CD4-positive, alpha-beta T cell (primary cell): ENCODE measurements at regions of chr14 and their contacts with region 1.

Region 1: DNA sequence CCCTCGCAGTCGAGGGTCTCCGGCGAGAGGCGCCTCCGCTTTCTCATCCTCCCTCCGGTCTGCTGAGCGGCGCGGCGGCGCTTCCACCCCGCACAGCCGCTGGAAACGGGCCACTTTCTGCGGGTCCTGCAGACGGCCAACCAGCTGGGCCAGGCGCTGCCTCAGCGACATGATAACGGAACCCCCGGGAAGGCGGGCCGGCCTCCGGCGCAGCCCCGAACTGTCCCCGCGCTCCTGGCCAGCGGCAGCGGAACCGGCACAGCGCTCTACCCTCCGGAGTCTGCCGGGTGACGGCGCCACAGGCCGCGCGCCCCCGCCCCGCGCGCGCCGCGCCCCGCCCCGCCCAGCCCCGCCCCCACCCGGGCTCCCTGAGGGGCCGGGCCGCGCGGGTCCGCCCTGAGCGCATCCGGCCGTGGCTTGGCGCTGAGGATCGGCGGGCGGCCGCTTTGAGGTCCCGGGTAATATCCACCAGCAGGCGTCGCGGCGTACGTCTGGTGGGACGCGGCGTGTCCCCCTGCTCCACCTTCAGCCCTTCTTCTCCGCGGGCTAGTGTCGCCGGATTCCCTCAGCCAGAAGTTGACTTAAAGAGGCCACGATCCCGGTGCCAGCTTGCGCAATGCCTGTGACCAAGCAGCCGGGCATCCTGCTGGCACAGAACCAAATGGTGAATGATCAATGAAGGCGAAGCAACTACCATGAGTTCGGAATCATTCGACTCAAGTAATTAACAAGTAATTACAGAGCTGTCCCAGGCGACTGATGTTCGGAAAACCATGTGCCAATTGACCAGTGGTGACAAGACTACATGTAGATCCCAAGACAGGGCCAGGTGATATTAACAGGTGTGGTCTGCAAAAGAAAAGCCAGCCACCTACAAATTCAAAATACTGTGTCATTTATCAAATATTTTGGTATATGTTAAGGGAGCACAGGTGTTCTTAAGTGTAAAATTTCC is at the start of gene SGPP1:
- DNase-seq: peak; percentile 60 to 92 (median 76)
- ATAC-seq: peak; percentile 88
- H3K4me3 ChIP-seq: peak within 1 kb of the TSS; percentile 96
- H3K4me3 Mint-ChIP-seq: peak within 1 kb of the TSS; percentile 93
- H3K27ac ChIP-seq: peak within 1 kb of the TSS; percentile 58 to 65
- H3K27ac Mint-ChIP-seq: peak within 1 kb of the TSS; percentile 93
- H3K4me1 ChIP-seq: peaks cover 20% of the 10 kb centered on the region
- H3K4me1 Mint-ChIP-seq: peaks cover 42% of the 10 kb centered on the region
- H3K27me3 ChIP-seq: no peaks in the 10 kb centered on the region
- H3K27me3 Mint-ChIP-seq: no peaks in the 10 kb centered on the region
- CTCF ChIP-seq: peak; percentile 54
- total RNA-seq, gene SGPP1: 16.6 to 16.8 TPM

Region 2: GRCh38 chr14:63543000-63543825 is 184.8 kb before region 1 on chr14 and contains the start of gene PPP2R5E:
- CTCF ChIA-PET with region 1: no interaction called
- POLR2A ChIA-PET with region 1: interaction called, 6 read pairs
- intact Hi-C with region 1: loop called in 1 of 2 experiments (anchors 5 kb)
- DNase-seq: peak; percentile 94 to 99 (median 96)
- ATAC-seq: peak; percentile 96
- H3K4me3 ChIP-seq: peak within 1 kb of the TSS; percentile 99
- H3K4me3 Mint-ChIP-seq: peak within 1 kb of the TSS; percentile 98
- H3K27ac ChIP-seq: peak within 1 kb of the TSS; percentile 79 to 82
- H3K27ac Mint-ChIP-seq: peak within 1 kb of the TSS; percentile 90
- H3K4me1 ChIP-seq: peaks cover 18% of the 10 kb centered on the region
- H3K4me1 Mint-ChIP-seq: peaks cover 46% of the 10 kb centered on the region
- H3K27me3 ChIP-seq: no peaks in the 10 kb centered on the region
- H3K27me3 Mint-ChIP-seq: no peaks in the 10 kb centered on the region
- CTCF ChIP-seq: no peak
- total RNA-seq, gene PPP2R5E: 31.2 to 32.3 TPM

Region 3: GRCh38 chr14:63632932-63633514 is 95.0 kb before region 1 on chr14:
- CTCF ChIA-PET with region 1: interaction called, 3 read pairs
- POLR2A ChIA-PET with region 1: interaction called, 6 read pairs
- intact Hi-C with region 1: loop called (anchors 2 kb)
- DNase-seq: peak in 3 of 14 experiments; percentile 64 to 71 (median 66)
- ATAC-seq: peak; percentile 96
- H3K4me3 ChIP-seq: no peak overlapping the region
- H3K4me3 Mint-ChIP-seq: no peak overlapping the region
- H3K27ac ChIP-seq: no peak overlapping the region
- H3K27ac Mint-ChIP-seq: peak overlapping the region; percentile 11
- H3K4me1 ChIP-seq: peaks cover 2% of the 10 kb centered on the region
- H3K4me1 Mint-ChIP-seq: peaks cover 57% of the 10 kb centered on the region
- H3K27me3 ChIP-seq: no peaks in the 10 kb centered on the region
- H3K27me3 Mint-ChIP-seq: no peaks in the 10 kb centered on the region
- CTCF ChIP-seq: peak; percentile 88

Region 4: DNA sequence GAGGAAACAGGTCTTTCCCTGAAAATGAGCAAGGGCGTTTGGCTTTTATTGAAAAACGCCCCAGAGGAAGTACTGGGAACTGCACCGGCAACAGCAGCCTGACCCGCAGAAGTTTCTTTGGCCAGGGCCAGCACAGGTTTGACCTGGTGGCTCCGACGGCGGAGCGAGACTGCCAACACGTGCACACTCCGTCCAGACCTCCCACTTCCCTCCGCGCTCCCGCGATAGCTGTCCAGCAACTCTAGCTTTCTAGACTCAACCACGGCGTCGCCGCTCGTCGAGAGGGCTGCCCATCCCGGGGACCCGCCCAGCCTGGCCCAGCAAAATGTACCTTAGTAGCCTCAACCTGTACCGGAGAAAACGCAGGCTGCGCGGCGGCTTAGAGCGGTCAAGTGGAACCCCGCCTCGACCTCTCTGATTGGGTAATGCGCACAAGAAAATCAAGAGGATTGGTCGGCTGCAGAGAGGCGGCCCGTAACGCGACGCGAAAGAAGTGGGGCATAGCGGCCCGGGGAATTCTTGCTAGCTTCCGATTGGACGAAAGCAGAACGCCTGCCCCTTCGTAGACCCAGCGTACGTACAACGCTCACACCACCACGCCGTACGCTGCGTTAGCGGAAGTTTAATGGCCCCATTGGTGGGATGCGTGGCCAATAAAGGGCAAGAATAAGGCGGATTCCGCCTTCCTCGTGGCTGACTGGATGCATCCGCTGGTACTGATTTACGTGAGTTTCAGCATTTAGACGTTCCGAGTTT is 86.4 kb before region 1 on chr14 and contains the start of gene WDR89:
- CTCF ChIA-PET with region 1: interaction called, 4 read pairs
- POLR2A ChIA-PET with region 1: interaction called, 99 read pairs
- intact Hi-C with region 1: no loop called
- DNase-seq: peak; percentile 90 to 99 (median 94)
- ATAC-seq: peak; percentile 83
- H3K4me3 ChIP-seq: peak within 1 kb of the TSS; percentile 96
- H3K4me3 Mint-ChIP-seq: peak within 1 kb of the TSS; percentile 91
- H3K27ac ChIP-seq: peak within 1 kb of the TSS; percentile 98 to 99
- H3K27ac Mint-ChIP-seq: peak within 1 kb of the TSS; percentile 91
- H3K4me1 ChIP-seq: peaks cover 27% of the 10 kb centered on the region
- H3K4me1 Mint-ChIP-seq: peaks cover 43% of the 10 kb centered on the region
- H3K27me3 ChIP-seq: no peaks in the 10 kb centered on the region
- H3K27me3 Mint-ChIP-seq: no peaks in the 10 kb centered on the region
- CTCF ChIP-seq: peak; percentile 47
- total RNA-seq, gene WDR89: 12.4 to 13.4 TPM

Region 5: DNA sequence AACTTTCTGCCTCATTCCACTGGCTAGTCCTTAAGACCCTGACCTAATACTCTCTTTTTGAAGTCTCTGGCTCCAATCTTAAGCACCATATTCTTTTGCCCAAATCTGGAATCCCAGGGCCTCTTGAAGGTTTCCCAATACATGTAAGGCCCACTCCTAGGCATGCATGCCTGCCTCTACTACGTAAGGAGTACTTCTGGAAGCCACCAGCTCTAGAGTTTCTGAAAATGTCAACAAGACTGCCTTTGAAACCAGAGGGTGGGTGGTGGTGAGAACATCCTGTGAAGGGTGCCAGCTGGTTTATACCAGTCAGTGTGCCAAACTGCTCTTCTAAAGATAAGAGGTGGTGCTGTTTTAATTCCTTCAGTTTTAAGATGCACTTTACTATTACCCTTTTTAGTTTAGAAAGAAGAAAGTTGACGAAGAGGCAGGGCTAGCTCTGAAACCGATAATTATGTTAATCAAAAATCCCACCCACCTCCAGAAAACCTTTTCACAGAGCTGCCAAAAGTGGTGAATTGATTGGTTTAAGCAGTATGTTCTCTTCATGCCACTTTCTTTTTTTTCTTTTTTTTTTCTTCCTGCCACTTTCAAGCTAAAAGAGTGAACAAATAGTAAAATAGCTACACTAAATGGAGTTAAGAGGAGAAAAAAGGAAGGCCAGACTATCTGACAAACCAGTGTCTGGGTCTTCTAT is 77.6 kb before region 1 on chr14:
- CTCF ChIA-PET with region 1: no interaction called
- POLR2A ChIA-PET with region 1: interaction called, 79 read pairs
- intact Hi-C with region 1: no loop called
- DNase-seq: peak; percentile 35 to 92 (median 56)
- ATAC-seq: peak; percentile 97
- H3K4me3 ChIP-seq: no peak overlapping the region
- H3K4me3 Mint-ChIP-seq: peak overlapping the region; percentile 85
- H3K27ac ChIP-seq: peak overlapping the region; percentile 80 to 88
- H3K27ac Mint-ChIP-seq: peak overlapping the region; percentile 100
- H3K4me1 ChIP-seq: peaks cover 42% of the 10 kb centered on the region
- H3K4me1 Mint-ChIP-seq: peaks cover 50% of the 10 kb centered on the region
- H3K27me3 ChIP-seq: no peaks in the 10 kb centered on the region
- H3K27me3 Mint-ChIP-seq: no peaks in the 10 kb centered on the region
- CTCF ChIP-seq: no peak

Region 6: DNA sequence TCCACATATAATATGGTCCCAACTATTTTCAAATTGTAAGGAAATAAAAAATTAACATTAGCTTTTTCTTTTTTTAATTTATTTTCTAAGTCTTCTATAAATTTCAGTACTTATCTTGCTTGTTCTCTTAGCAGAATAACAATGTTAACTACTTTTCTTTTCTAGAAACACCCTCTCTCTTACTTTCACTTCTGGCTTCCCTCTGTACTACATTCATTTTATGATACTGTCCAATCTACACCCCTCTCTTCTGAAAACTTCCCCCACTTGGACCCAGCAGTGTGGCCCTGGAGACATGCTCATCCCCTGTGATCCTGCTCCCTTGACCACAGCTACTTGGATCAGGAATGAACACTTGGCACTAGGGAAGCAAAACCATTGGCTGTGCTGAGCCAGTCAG is 15.9 kb before region 1 on chr14:
- CTCF ChIA-PET with region 1: interaction called, 7 read pairs
- POLR2A ChIA-PET with region 1: interaction called, 10 read pairs
- intact Hi-C with region 1: no loop called
- DNase-seq: no peak
- ATAC-seq: no peak
- H3K4me3 ChIP-seq: no peak overlapping the region
- H3K4me3 Mint-ChIP-seq: no peak overlapping the region
- H3K27ac ChIP-seq: no peak overlapping the region
- H3K27ac Mint-ChIP-seq: no peak overlapping the region
- H3K4me1 ChIP-seq: peaks cover 15% of the 10 kb centered on the region
- H3K4me1 Mint-ChIP-seq: peaks cover 42% of the 10 kb centered on the region
- H3K27me3 ChIP-seq: no peaks in the 10 kb centered on the region
- H3K27me3 Mint-ChIP-seq: no peaks in the 10 kb centered on the region
- CTCF ChIP-seq: no peak

Region 7: DNA sequence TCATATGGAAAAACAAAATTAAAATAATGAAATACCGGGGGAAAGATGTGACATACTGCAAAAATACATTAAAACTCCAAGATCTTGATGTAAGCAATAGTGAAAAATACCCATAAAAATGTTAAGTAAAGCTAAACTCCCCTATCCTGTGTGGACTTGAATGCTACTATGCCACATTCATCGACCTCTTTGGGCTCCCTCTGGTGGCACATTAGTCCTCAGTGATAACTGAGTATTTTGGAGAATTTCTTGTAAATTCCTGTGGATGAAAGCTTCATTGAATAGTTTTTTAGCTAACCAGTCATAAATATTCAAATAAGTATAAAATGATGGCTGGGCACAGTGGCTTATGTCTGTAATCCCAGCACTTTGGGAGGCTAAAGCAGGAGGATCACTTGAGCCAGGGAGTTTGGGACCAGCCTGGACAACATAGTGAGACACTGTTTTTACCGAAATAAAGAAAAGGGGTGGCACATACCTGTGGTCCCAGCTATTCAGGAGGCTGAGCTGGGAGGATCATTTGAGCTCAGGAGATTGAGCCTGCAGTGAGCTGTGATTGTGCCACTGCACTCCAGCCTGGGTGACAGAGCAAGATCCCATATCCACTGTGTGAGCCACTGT is 42.2 kb after region 1 on chr14:
- CTCF ChIA-PET with region 1: interaction called, 5 read pairs
- POLR2A ChIA-PET with region 1: interaction called, 12 read pairs
- intact Hi-C with region 1: loop called (anchors 1 to 2 kb)
- DNase-seq: peak; percentile 11 to 79 (median 46)
- ATAC-seq: peak; percentile 76
- H3K4me3 ChIP-seq: no peak overlapping the region
- H3K4me3 Mint-ChIP-seq: no peak overlapping the region
- H3K27ac ChIP-seq: no peak overlapping the region
- H3K27ac Mint-ChIP-seq: no peak overlapping the region
- H3K4me1 ChIP-seq: no peaks in the 10 kb centered on the region
- H3K4me1 Mint-ChIP-seq: peaks cover 5% of the 10 kb centered on the region
- H3K27me3 ChIP-seq: no peaks in the 10 kb centered on the region
- H3K27me3 Mint-ChIP-seq: no peaks in the 10 kb centered on the region
- CTCF ChIP-seq: peak; percentile 75